Gastrocnemius medialis (tissue), 4 donors: ENCODE measurements at regions of chr2 and their contacts with region 1.

Region 1: DNA sequence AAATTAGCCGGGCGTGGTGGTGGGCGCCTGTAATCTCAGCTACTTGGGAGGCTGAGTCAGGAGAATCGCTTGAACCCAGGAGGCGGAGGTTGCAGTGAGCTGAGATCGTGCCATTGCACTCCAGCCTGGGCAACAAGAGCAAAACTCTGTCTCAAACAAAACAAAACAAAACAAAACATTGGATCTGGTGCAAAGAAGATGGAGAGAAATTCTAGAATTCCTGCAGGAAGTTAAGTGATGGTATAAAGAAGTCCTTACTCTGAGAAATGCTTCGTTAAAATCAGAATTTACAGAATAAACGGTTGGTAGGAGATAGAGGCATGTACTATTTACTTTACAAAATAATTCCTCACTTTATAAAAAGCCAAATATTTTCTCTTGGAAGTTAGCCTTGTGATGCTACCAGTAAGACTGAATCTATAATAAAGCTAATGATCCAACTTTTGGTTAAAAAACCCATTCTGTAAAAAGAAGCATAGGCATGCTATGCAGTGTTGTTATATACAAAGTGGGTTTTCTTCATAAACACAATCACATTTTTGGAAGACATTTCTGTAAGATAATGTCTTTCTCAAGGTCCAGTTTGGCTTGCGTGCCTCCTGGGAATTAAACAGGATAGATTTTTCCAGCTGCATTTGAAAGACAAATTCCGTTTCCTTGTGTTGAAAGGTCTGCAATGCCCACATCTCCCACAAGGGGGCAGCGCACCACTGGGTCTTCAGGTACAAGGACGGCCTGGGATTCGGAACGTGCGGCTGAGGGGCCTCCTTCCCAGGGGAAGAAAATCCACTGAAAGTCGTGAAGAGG is 35.6 kb upstream of the PNO1 start:
- DNase-seq: peak; percentile 53 to 77
- ATAC-seq: peak; percentile 19 to 65
- H3K4me3 ChIP-seq: no peak overlapping the region
- H3K27ac ChIP-seq: no peak overlapping the region
- H3K4me1 ChIP-seq: peaks cover 0 to 4% of the 10 kb centered on the region in 2 donors
- H3K27me3 ChIP-seq: no peaks in the 10 kb centered on the region
- CTCF ChIP-seq: peak; percentile 86 to 95 (median 89)
- POLR2A ChIP-seq: no peak

Region 2: DNA sequence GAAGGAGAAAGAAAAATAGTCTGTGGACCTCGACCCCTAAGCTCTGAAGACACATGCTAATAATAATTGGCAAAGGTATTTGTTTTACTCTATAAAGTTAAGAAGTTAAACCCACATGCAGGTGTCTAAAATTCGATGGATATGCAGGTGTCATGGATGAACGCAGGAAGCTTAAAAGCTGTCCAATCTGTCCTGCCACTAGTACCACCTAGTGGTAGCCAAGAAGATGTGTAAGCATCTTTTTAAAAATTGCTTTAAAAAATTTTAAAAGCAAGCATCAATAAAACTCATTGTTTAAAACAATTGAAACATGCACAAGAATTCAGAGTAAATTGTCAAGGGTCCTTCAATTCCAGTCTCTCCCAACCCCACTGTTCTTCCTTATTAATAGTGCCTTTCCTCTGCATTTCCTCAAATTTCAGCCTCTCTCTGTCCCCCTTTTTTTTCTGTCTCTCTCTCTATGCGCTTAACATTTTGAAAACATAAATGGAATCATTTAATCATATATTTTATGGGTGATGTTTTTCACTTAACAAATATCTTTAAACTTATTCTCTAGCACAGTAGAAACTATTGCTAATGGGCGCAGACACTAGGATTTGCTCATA is 160.8 kb after region 1 on chr2:
- in situ Hi-C with region 1: loop called in 2 of 4 experiments (anchors 10 kb)
- intact Hi-C with region 1: loop called (anchors 2 kb)
- DNase-seq: no peak
- ATAC-seq: peak in 1 of 2 donors; percentile 54
- H3K4me3 ChIP-seq: no peak overlapping the region
- H3K27ac ChIP-seq: no peak overlapping the region
- H3K4me1 ChIP-seq: peaks cover 16 to 17% of the 10 kb centered on the region in 2 donors
- H3K27me3 ChIP-seq: no peaks in the 10 kb centered on the region
- CTCF ChIP-seq: peak in 4 of 5 experiments; percentile 53 to 75 (median 60)
- POLR2A ChIP-seq: no peak

Region 3: DNA sequence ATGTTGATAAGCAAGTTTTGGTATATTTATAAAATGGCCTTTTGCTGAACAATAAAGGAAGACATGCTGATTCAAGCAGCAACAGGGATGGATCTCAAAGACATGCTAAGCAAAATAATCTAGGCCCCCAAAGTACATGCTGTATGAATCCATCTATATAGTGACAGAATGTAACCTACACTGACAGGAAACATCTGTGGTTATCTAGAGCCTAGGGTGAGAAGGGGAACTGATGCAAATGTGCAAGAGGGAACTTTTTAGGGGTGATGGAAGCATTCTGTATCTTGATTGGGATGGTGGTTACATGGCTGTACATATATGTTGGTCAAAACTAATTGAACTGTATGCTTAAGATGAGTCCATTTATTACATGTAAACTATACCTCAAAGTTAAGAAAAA is 173.4 kb after region 1 on chr2:
- in situ Hi-C with region 1: loop called in 1 of 4 experiments (anchors 10 kb)
- intact Hi-C with region 1: no loop called
- DNase-seq: no peak
- ATAC-seq: no peak
- H3K4me3 ChIP-seq: no peak overlapping the region
- H3K27ac ChIP-seq: peak overlapping the region in 1 of 4 donors; percentile 45
- H3K4me1 ChIP-seq: peaks cover 34 to 46% of the 10 kb centered on the region in 2 donors
- H3K27me3 ChIP-seq: no peaks in the 10 kb centered on the region
- CTCF ChIP-seq: no peak
- POLR2A ChIP-seq: no peak

Region 4: DNA sequence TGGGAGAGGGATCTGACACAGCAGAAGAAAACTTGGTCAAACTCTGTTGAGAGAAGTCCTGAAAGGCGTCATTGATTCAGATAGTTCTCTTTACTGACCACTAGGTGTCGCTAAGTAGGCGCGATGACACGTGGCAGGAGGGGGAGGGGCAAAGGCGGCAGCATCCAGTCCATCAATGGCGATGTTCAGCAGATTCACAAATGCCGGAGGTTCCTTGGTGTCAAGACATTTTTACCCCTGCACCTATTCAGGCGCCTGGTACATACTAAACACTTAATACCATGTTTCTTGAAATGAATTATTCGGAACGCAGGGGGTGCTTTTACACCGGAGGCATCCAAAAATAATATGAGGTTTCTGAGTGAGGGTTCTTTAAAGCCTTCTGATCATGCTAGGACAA is 240.0 kb after region 1 on chr2:
- in situ Hi-C with region 1: no loop called
- intact Hi-C with region 1: loop called (anchors 5 kb)
- DNase-seq: peak; percentile 21 to 34
- ATAC-seq: peak in 1 of 2 donors; percentile 52
- H3K4me3 ChIP-seq: no peak overlapping the region
- H3K27ac ChIP-seq: no peak overlapping the region
- H3K4me1 ChIP-seq: no peaks in the 10 kb centered on the region
- H3K27me3 ChIP-seq: no peaks in the 10 kb centered on the region
- CTCF ChIP-seq: peak; percentile 31 to 55 (median 46)
- POLR2A ChIP-seq: no peak

Region 5: GRCh38 chr2:68434981-68435380 is 312.9 kb after region 1 on chr2:
- in situ Hi-C with region 1: loop called (anchors 5 to 10 kb)
- intact Hi-C with region 1: no loop called
- DNase-seq: no peak
- ATAC-seq: no peak
- H3K4me3 ChIP-seq: no peak overlapping the region
- H3K27ac ChIP-seq: no peak overlapping the region
- H3K4me1 ChIP-seq: peaks cover 3 to 5% of the 10 kb centered on the region in 2 donors
- H3K27me3 ChIP-seq: no peaks in the 10 kb centered on the region
- CTCF ChIP-seq: no peak
- POLR2A ChIP-seq: no peak

Region 6: DNA sequence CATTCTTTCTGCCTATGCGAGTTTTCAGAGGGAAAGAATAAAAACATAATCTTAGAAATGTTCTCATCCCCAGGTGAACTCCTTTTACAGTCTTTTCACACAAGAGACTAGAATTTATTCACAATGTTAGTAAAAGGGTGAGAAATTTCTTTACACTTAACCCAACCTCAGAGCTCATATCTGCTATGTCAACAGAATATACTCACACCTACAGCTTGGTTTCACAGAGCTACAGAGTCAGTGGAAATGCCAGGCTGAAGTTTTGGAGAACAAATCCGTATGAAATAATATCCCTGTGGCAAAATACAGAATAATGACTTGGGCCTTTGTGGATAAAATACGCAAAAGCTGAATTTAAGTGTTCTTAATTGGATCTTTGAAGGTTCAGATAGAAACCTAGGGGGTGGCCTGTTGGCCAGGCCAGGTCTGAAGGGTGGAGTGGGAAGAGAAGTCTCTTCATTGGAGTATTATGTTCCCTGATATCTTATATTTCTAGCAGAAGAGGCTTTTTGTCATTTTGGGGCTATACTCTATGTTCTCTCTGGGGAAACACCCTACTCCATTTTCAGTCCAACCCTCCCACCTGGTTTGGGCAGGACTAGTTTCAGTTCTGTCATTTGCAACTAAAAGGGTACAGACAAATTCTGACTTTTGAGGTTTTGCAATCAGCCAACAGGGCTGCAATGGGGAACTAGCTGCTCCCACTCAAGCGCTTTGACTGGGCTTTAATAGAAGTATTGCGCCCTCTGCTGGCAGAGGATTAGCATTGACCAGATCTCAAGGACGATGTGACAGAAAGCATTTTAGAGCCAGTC is 319.3 kb after region 1 on chr2:
- in situ Hi-C with region 1: loop called (anchors 5 to 10 kb)
- intact Hi-C with region 1: loop called (anchors 1 kb)
- DNase-seq: peak; percentile 66 to 68
- ATAC-seq: peak; percentile 94 to 96
- H3K4me3 ChIP-seq: no peak overlapping the region
- H3K27ac ChIP-seq: no peak overlapping the region
- H3K4me1 ChIP-seq: no peaks in the 10 kb centered on the region
- H3K27me3 ChIP-seq: no peaks in the 10 kb centered on the region
- CTCF ChIP-seq: peak; percentile 70 to 87 (median 80)
- POLR2A ChIP-seq: no peak